Motor neuron (in vitro differentiated cells): ENCODE measurements at regions of chr18 and their contacts with region 1.

Region 1: GRCh38 chr18:57859314-57859713 is 56.2 kb upstream of the ATP8B1 start:
- ATAC-seq: peak in 3 of 8 experiments; percentile 57 to 76 (median 60)
- H3K4me3 ChIP-seq: no peak overlapping the region
- H3K27ac ChIP-seq: no peak overlapping the region
- H3K4me1 ChIP-seq: no peaks in the 10 kb centered on the region

Region 2: DNA sequence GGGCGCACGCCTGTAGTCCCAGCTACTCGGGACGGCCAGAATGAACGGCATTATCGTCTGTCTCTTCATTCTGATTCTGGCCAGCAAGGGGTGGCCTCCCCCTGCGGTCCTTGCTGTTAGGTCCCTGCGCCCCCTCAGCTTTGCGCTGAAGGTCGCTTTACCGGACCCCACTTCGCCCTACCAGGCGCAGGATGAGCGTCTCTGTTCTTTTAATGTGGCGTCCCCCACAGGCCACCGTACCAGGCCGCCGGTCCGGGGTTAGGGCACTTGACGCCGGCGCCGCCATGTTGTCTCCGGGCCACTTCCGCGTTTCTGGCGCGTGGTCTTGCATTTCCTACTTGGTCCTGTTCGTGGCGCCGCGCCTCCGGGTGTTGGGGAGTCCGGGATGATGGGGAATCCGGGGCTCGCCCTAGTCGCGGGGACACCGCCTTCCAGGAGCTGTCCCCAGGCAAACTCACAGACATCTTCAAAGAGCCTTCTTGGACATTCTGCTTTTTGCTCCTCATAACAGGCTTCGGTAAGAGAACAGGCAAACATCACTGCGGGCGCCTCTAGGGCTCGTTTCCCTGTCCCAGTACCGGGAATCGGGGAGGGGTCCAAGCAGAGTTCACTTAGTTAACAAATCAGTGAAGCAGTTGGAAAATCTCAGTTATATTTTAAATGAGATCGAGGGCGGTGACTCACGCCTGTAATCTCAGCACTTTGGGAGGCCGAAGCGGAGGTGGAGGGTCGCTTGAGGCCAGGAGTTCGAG is 229.1 kb before region 1 on chr18:
- in situ Hi-C with region 1: loop called in 1 of 9 experiments (anchors 25 kb)
- ATAC-seq: peak; percentile 95 to 99 (median 97)
- H3K4me3 ChIP-seq: peak overlapping the region; percentile 36 to 59 (median 52)
- H3K27ac ChIP-seq: peak overlapping the region; percentile 21 to 41
- H3K4me1 ChIP-seq: no peaks in the 10 kb centered on the region

Region 3: DNA sequence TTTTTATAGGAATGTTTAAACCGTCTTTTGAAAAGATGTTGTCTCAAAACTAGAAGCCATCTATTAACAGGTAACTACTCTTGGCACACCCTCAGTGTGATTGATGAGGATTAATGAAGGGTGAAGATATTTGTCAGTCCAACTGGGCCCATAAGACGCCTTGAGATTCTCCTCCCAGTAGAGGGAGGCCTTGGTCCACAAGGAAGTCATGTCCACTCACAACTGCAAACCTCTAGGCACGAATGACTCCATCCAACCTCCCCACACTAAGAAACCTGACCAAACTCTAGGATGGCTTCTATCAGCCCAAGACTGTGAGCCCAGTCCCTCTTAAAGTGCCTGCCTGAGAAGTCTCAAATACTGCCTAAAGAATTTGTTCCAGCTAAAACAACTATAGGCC is 1341.5 kb after region 1 on chr18:
- in situ Hi-C with region 1: no loop called
- ATAC-seq: peak in 3 of 8 experiments; percentile 42 to 68 (median 44)
- H3K4me3 ChIP-seq: no peak overlapping the region
- H3K27ac ChIP-seq: no peak overlapping the region
- H3K4me1 ChIP-seq: no peaks in the 10 kb centered on the region